CD14-positive monocyte (primary cell): ENCODE measurements at regions of chr14 and their contacts with region 1.

Region 1: GRCh38 chr14:104826189-104826860 is 25.4 kb downstream of the ZBTB42 start:
- DNase-seq: peak; percentile 78 to 85 (median 82)
- H3K4me3 ChIP-seq: peak overlapping the region; percentile 48 to 76 (median 52)
- H3K4me3 Mint-ChIP-seq: peak overlapping the region; percentile 75 to 89
- H3K27ac ChIP-seq: no peak overlapping the region
- H3K27ac Mint-ChIP-seq: peak overlapping the region in 1 of 7 donors; percentile 32
- H3K4me1 ChIP-seq: peaks cover 18 to 25% of the 10 kb centered on the region in 2 donors
- H3K4me1 Mint-ChIP-seq: peaks cover 23% of the 10 kb centered on the region
- H3K27me3 ChIP-seq: peaks cover 13 to 31% of the 10 kb centered on the region in 2 donors
- H3K27me3 Mint-ChIP-seq: peaks cover 34 to 53% (median 44%) of the 10 kb centered on the region in 3 donors
- CTCF ChIP-seq: peak; percentile 75

Region 2: GRCh38 chr14:104768437-104769323 is 57.6 kb before region 1 on chr14:
- intact Hi-C with region 1: loop called (anchors 1 to 2 kb)
- DNase-seq: peak; percentile 80 to 84 (median 81)
- H3K4me3 ChIP-seq: no peak overlapping the region
- H3K4me3 Mint-ChIP-seq: no peak overlapping the region
- H3K27ac ChIP-seq: no peak overlapping the region
- H3K27ac Mint-ChIP-seq: no peak overlapping the region
- H3K4me1 ChIP-seq: peaks cover 0 to 9% of the 10 kb centered on the region in 2 donors
- H3K4me1 Mint-ChIP-seq: peaks cover 6% of the 10 kb centered on the region
- H3K27me3 ChIP-seq: no peaks in the 10 kb centered on the region
- H3K27me3 Mint-ChIP-seq: no peaks in the 10 kb centered on the region
- CTCF ChIP-seq: peak; percentile 89

Region 3: GRCh38 chr14:104856869-104857860 is 30.8 kb after region 1 on chr14:
- intact Hi-C with region 1: no loop called
- DNase-seq: no peak
- H3K4me3 ChIP-seq: no peak overlapping the region
- H3K4me3 Mint-ChIP-seq: peak overlapping the region in 1 of 2 donors; percentile 6
- H3K27ac ChIP-seq: no peak overlapping the region
- H3K27ac Mint-ChIP-seq: peak overlapping the region in 1 of 7 donors; percentile 2
- H3K4me1 ChIP-seq: no peaks in the 10 kb centered on the region
- H3K4me1 Mint-ChIP-seq: no peaks in the 10 kb centered on the region
- H3K27me3 ChIP-seq: no peaks in the 10 kb centered on the region
- H3K27me3 Mint-ChIP-seq: peaks cover 3 to 12% (median 11%) of the 10 kb centered on the region in 3 donors
- CTCF ChIP-seq: no peak

Region 4: GRCh38 chr14:105248368-105248756 is 422.0 kb after region 1 on chr14 and contains the start of gene BTBD6:
- intact Hi-C with region 1: no loop called
- DNase-seq: peak; percentile 75 to 81 (median 76)
- H3K4me3 ChIP-seq: peak within 1 kb of the TSS; percentile 37 to 82 (median 41)
- H3K4me3 Mint-ChIP-seq: peak within 1 kb of the TSS; percentile 81 to 88
- H3K27ac ChIP-seq: peak within 1 kb of the TSS; percentile 29 to 55
- H3K27ac Mint-ChIP-seq: peak within 1 kb of the TSS; percentile 54 to 85 (median 81)
- H3K4me1 ChIP-seq: peaks cover 12 to 22% of the 10 kb centered on the region in 2 donors
- H3K4me1 Mint-ChIP-seq: peaks cover 19% of the 10 kb centered on the region
- H3K27me3 ChIP-seq: no peaks in the 10 kb centered on the region
- H3K27me3 Mint-ChIP-seq: no peaks in the 10 kb centered on the region
- CTCF ChIP-seq: peak; percentile 8
- polyA plus RNA-seq, gene BTBD6: 1.3 to 24.4 (median 6.3) TPM